Heart left ventricle (tissue), 16 donors: ENCODE measurements at regions of chr7 and their contacts with region 1.

Region 1: GRCh38 chr7:1503816-1504775 is at the start of gene INTS1:
- DNase-seq: peak; percentile 92 to 95 (median 94)
- ATAC-seq: peak; percentile 72 to 92 (median 88)
- H3K4me3 ChIP-seq: peak within 1 kb of the TSS; percentile 82 to 100 (median 100)
- H3K27ac ChIP-seq: peak within 1 kb of the TSS in 11 of 12 donors; percentile 56 to 90 (median 78)
- H3K4me1 ChIP-seq: peaks cover 5 to 39% (median 24%) of the 10 kb centered on the region in 12 donors
- H3K27me3 ChIP-seq: no peaks in the 10 kb centered on the region
- CTCF ChIP-seq: peak; percentile 75 to 99 (median 92)
- POLR2A ChIP-seq: peak in 1 of 2 donors; percentile 83
- total RNA-seq, gene INTS1: 35.5 to 67.4 (median 45.3) TPM

Region 2: DNA sequence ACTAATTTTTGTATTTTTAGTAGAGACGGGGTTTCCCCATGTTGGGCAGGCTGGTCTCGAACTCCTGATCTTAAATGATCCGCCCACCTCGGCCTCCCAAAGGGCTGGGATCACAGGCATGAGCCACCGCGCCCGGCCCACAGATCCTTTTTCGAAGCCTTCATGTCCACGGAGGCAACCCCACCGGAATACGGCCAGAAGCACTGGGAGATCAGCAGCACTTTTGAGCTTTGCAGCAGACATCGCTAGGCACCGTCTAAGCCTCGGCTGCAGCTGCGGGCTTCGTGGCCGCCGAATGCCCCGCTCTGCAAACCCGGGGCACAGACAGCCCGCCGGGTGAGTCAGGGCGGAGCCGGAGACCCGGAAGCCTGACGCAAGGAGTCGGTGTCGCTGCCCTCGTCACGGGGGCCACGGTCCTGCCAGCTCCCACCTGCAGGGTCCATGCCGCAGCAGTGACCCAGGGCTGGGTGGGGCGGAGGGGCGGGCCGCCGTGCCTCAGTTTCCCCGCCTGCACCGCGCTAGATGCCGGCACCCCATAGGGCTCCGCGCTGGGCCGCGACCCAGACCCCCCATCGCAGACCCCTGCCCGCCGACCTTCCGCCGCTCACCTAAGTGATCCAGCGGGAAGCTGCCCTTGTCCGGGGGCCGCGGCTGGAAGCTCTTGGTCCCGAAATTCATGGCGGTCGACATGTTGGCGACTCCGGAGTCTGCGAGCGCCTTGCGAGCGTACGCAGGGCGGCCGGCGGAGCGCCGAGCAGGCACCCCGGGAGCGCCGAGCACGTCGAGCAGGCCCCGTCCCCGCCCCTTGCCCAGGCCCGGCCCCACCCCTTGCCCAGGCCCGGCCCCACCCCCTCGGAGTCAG is 529.0 kb before region 1 on chr7 and contains the start of gene COX19:
- intact Hi-C with region 1: no loop called
- DNase-seq: peak; percentile 89 to 95 (median 91)
- ATAC-seq: peak; percentile 91 to 98 (median 95)
- H3K4me3 ChIP-seq: peak within 1 kb of the TSS; percentile 71 to 100 (median 98)
- H3K27ac ChIP-seq: peak within 1 kb of the TSS; percentile 85 to 99 (median 96)
- H3K4me1 ChIP-seq: peaks cover 3 to 36% (median 25%) of the 10 kb centered on the region in 12 donors
- H3K27me3 ChIP-seq: no peaks in the 10 kb centered on the region
- CTCF ChIP-seq: no peak
- POLR2A ChIP-seq: peak in 1 of 2 donors; percentile 67
- total RNA-seq, gene COX19: 3.1 to 7.8 (median 6.5) TPM

Region 3: GRCh38 chr7:1532483-1533424 is 28.7 kb after region 1 on chr7:
- intact Hi-C with region 1: loop called in 1 of 10 experiments (anchors 1 kb)
- DNase-seq: peak; percentile 82 to 87 (median 83)
- ATAC-seq: peak; percentile 18 to 55 (median 36)
- H3K4me3 ChIP-seq: peak overlapping the region; percentile 39 to 94 (median 66)
- H3K27ac ChIP-seq: peak overlapping the region; percentile 90 to 100 (median 96)
- H3K4me1 ChIP-seq: peaks cover 18 to 69% (median 52%) of the 10 kb centered on the region in 12 donors
- H3K27me3 ChIP-seq: no peaks in the 10 kb centered on the region
- CTCF ChIP-seq: no peak
- POLR2A ChIP-seq: peak in 1 of 2 donors; percentile 77

Region 4: GRCh38 chr7:1537535-1538412 is 33.7 kb after region 1 on chr7:
- intact Hi-C with region 1: loop called in 1 of 10 experiments (anchors 2 kb)
- DNase-seq: peak; percentile 91 to 95 (median 93)
- ATAC-seq: peak; percentile 13 to 61 (median 43)
- H3K4me3 ChIP-seq: peak overlapping the region; percentile 30 to 71 (median 58)
- H3K27ac ChIP-seq: peak overlapping the region; percentile 93 to 100 (median 98)
- H3K4me1 ChIP-seq: peaks cover 22 to 67% (median 53%) of the 10 kb centered on the region in 12 donors
- H3K27me3 ChIP-seq: no peaks in the 10 kb centered on the region
- CTCF ChIP-seq: no peak
- POLR2A ChIP-seq: peak in 1 of 2 donors; percentile 52

Region 5: DNA sequence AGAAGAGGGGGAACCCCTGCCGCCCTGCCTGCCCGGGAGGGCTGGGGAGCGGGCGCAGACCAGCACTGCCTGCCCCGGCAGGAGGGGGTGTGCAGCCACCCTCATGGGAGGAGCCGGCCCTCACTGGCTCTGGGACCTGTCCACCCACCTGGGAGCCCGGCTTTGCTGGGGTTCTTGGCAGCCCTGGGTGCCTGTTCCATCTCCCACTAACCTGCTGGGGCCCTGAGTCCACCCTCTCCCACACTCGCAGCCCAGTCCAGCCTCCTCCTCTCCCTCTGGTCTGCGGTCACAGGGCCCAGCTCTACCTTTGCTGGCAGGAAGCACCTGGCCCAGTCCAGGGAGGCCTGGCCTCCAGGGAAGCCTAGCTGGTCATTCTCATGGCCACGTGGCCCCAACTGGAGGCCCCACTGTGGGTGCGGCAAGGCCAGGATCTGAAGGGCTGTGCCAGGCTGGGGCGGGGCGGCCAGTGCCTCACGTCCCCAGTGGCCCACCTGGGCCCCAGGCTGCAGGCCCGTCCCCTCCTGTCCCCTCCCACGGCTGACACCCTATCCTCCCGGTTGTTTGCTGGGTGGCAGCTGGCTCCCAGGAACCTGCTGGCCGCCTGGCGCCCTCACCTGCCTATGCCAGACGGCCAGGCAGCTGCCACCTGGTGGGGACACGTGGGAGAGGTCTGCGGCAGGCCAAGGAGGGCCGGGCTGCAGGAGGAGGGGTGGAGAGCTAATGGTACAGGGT is 51.9 kb after region 1 on chr7 and contains the start of gene TMEM184A:
- intact Hi-C with region 1: loop called in 8 of 10 experiments (anchors 1 to 10 kb)
- DNase-seq: peak in 2 of 5 donors; percentile 63 to 79
- ATAC-seq: peak in 3 of 4 donors; percentile 33 to 56 (median 46)
- H3K4me3 ChIP-seq: no peak within 1 kb of the TSS
- H3K27ac ChIP-seq: peak within 1 kb of the TSS in 1 of 12 donors; percentile 26
- H3K4me1 ChIP-seq: peaks cover 0 to 25% (median 12%) of the 10 kb centered on the region in 12 donors
- H3K27me3 ChIP-seq: peaks cover 0 to 3% (median 0%) of the 10 kb centered on the region in 9 donors
- CTCF ChIP-seq: peak in 11 of 12 donors; percentile 14 to 56 (median 36)
- POLR2A ChIP-seq: no peak
- total RNA-seq, gene TMEM184A: 0.19 to 0.85 (median 0.47) TPM

Region 6: GRCh38 chr7:1603346-1604211 is 99.5 kb after region 1 on chr7:
- intact Hi-C with region 1: no loop called
- DNase-seq: peak in 1 of 5 donors; percentile 38
- ATAC-seq: no peak
- H3K4me3 ChIP-seq: no peak overlapping the region
- H3K27ac ChIP-seq: no peak overlapping the region
- H3K4me1 ChIP-seq: no peaks in the 10 kb centered on the region
- H3K27me3 ChIP-seq: peaks cover 0 to 31% (median 0%) of the 10 kb centered on the region in 9 donors
- CTCF ChIP-seq: no peak
- POLR2A ChIP-seq: no peak